GM13977 (cell line): ENCODE measurements at regions of chr9 and their contacts with region 1.

Region 1: GRCh38 chr9:71806901-71807307 is 38.6 kb upstream of the CEMIP2 start:
- DNase-seq: peak; percentile 55
- CTCF ChIP-seq: peak; percentile 96

Region 2: DNA sequence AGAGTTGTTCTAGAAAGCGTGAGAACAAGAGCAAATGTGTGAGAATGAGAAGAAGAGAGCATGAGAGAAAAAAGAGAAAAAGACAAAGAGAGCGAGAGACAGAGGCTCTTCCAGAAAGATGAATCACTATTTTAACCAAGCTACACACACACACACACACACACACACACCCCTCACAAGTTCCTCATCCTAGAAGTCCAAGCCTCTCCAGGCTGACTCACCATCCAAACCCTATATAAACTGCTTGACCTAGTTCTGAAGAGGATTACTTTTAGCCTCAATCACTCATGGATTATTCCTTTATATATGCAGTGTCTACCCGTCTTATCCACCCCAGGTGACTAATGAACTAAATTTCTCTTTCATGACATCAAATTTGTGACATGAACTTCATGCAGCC is 215.9 kb after region 1 on chr9:
- in situ Hi-C with region 1: loop called (anchors 25 kb)
- DNase-seq: no peak
- CTCF ChIP-seq: no peak

Region 3: DNA sequence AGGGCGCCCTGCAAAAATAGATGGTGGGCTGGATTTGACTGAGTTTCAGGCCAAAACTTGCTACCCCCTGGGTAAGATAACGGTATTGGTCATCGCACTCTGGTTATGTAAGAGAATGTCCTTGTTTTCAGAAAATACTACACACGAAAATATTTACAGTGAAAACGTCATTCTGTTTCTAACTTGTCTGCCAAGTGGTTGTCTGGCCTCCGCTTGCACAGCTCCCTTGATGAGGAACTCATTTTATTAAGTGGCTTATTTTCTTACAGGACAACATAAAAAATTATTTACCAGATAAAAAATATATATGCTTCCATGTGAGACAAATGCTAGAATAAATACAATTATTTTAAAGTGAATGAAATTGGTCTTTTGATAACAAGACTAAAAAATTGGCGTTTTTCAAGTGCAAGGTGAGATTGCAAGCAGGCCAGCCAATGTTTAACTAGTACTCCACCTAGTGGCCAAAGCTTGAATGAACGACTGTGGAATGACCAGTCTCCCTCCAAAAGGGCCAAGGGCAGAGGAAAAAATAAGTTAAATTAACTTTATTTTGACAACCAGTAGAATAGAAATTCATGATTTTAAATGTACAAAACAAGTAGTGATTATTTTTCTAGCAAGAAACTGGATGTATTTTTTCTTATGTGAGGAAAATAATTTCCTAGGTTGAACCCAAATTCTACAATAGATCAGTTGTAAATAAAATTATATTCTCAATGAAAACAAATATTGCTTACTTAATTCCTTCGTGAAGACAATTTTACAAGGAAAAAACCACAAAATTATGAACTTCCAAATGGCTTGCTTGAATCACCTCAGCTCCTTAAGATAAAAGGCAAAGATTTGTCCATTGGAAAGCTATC is 464.9 kb after region 1 on chr9:
- in situ Hi-C with region 1: loop called (anchors 25 kb)
- DNase-seq: peak; percentile 70
- CTCF ChIP-seq: peak; percentile 83